CD8-positive, alpha-beta T cell (primary cell): ENCODE measurements at regions of chr2 and their contacts with region 1.

Region 1: GRCh38 chr2:19158208-19158607 is 200.2 kb downstream of the OSR1 start:
- DNase-seq: no peak
- ATAC-seq: no peak
- H3K4me3 ChIP-seq: no peak overlapping the region
- H3K4me3 Mint-ChIP-seq: no peak overlapping the region
- H3K27ac ChIP-seq: no peak overlapping the region
- H3K27ac Mint-ChIP-seq: no peak overlapping the region
- H3K4me1 ChIP-seq: no peaks in the 10 kb centered on the region
- H3K4me1 Mint-ChIP-seq: no peaks in the 10 kb centered on the region
- H3K27me3 ChIP-seq: no peaks in the 10 kb centered on the region
- H3K27me3 Mint-ChIP-seq: no peaks in the 10 kb centered on the region
- CTCF ChIP-seq: no peak

Region 2: DNA sequence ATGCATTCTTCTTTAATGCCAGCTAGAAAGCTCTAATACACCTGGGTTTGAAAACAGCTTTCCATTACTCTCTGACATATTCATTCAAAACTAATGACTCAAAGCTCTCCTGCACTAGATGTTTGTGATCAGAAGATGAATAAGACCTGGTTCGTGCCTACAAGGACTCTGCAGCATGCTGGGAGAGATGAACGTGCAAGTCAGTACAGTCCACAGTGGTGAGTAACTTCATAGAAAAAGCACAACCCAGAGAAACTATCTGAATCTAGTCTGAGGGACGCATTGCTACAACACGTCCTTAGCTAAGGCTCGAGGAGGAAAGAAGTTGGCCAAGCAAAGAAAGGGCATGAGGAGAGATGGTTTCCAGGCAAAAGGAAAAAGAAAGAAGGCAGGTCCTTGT is 34.1 kb before region 1 on chr2:
- CTCF ChIA-PET with region 1: no interaction called
- POLR2A ChIA-PET with region 1: no interaction called
- intact Hi-C with region 1: no loop called
- DNase-seq: no peak
- ATAC-seq: no peak
- H3K4me3 ChIP-seq: no peak overlapping the region
- H3K4me3 Mint-ChIP-seq: no peak overlapping the region
- H3K27ac ChIP-seq: no peak overlapping the region
- H3K27ac Mint-ChIP-seq: no peak overlapping the region
- H3K4me1 ChIP-seq: no peaks in the 10 kb centered on the region
- H3K4me1 Mint-ChIP-seq: no peaks in the 10 kb centered on the region
- H3K27me3 ChIP-seq: no peaks in the 10 kb centered on the region
- H3K27me3 Mint-ChIP-seq: no peaks in the 10 kb centered on the region
- CTCF ChIP-seq: no peak

Region 3: GRCh38 chr2:19195661-19196060 is 37.5 kb after region 1 on chr2:
- CTCF ChIA-PET with region 1: no interaction called
- POLR2A ChIA-PET with region 1: no interaction called
- intact Hi-C with region 1: loop called in 1 of 2 experiments (anchors 1 kb)
- DNase-seq: no peak
- ATAC-seq: no peak
- H3K4me3 ChIP-seq: no peak overlapping the region
- H3K4me3 Mint-ChIP-seq: no peak overlapping the region
- H3K27ac ChIP-seq: no peak overlapping the region
- H3K27ac Mint-ChIP-seq: no peak overlapping the region
- H3K4me1 ChIP-seq: no peaks in the 10 kb centered on the region
- H3K4me1 Mint-ChIP-seq: no peaks in the 10 kb centered on the region
- H3K27me3 ChIP-seq: peaks cover 0 to 3% of the 10 kb centered on the region in 2 experiments
- H3K27me3 Mint-ChIP-seq: no peaks in the 10 kb centered on the region
- CTCF ChIP-seq: no peak

Region 4: GRCh38 chr2:19801367-19802080 is 643.3 kb after region 1 on chr2:
- CTCF ChIA-PET with region 1: no interaction called
- POLR2A ChIA-PET with region 1: no interaction called
- intact Hi-C with region 1: no loop called
- DNase-seq: no peak
- ATAC-seq: no peak
- H3K4me3 ChIP-seq: no peak overlapping the region
- H3K4me3 Mint-ChIP-seq: no peak overlapping the region
- H3K27ac ChIP-seq: no peak overlapping the region
- H3K27ac Mint-ChIP-seq: no peak overlapping the region
- H3K4me1 ChIP-seq: no peaks in the 10 kb centered on the region
- H3K4me1 Mint-ChIP-seq: no peaks in the 10 kb centered on the region
- H3K27me3 ChIP-seq: no peaks in the 10 kb centered on the region
- H3K27me3 Mint-ChIP-seq: peaks cover 12% of the 10 kb centered on the region
- CTCF ChIP-seq: no peak